ENCODE measurements at regions of chr2 and their contacts with region 1.

Region 1: GRCh38 chr2:240566203-240567136 is 1.8 kb upstream of the RNPEPL1 start:
- DNase-seq: peak; percentile 93
- H3K4me3 Mint-ChIP-seq: peak overlapping the region; percentile 93
- H3K27ac Mint-ChIP-seq: peak overlapping the region; percentile 99
- H3K4me1 Mint-ChIP-seq: peaks cover 83% of the 10 kb centered on the region
- H3K27me3 Mint-ChIP-seq: no peaks in the 10 kb centered on the region

Region 2: GRCh38 chr2:240232961-240233893 is 333.2 kb before region 1 on chr2:
- intact Hi-C with region 1: loop called (anchors 5 kb)
- DNase-seq: peak; percentile 52
- H3K4me3 Mint-ChIP-seq: no peak overlapping the region
- H3K27ac Mint-ChIP-seq: no peak overlapping the region
- H3K4me1 Mint-ChIP-seq: no peaks in the 10 kb centered on the region
- H3K27me3 Mint-ChIP-seq: no peaks in the 10 kb centered on the region

Region 3: DNA sequence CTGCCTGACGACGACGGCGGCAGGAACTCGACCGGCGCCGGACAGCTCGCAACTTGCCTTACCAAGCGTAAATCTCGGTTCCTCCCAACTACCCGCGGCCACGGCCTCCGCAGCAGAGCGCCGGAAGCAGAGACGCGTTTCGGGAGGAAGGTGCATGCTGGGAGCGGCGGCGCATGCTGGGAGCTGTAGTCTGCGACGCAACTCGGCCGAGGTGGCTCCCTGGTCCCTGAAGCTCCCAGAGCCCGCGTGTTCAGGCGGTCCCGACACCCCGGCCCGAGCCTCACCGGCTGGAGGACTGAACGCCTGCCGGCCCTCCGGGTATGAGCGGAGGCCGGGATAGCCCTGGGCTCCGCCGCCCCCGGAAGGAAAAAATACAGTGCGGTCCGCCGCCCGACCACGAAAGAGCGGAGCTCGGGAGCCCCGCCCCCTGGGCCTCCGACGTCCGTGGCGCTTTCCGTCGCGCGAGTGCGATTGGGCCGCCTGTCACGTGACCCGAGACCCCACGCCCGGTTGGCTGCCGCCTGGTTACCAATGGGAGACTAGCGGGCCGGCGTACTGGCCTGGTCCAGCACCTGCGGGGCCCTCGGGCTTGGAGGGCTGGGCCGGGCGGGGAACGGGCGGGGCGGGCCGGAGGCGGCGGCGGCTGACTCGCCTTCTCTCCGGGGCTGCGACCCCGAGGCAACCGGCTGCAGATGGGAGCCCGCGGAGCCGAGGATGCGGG is 19.9 kb after region 1 on chr2 and contains the start of gene CAPN10:
- intact Hi-C with region 1: loop called (anchors 1 kb)
- DNase-seq: peak; percentile 97
- H3K4me3 Mint-ChIP-seq: peak within 1 kb of the TSS; percentile 96
- H3K27ac Mint-ChIP-seq: peak within 1 kb of the TSS; percentile 93
- H3K4me1 Mint-ChIP-seq: peaks cover 38% of the 10 kb centered on the region
- H3K27me3 Mint-ChIP-seq: no peaks in the 10 kb centered on the region
- total RNA-seq, gene CAPN10: 49.8 and 55.4 TPM in 2 replicates

Region 4: DNA sequence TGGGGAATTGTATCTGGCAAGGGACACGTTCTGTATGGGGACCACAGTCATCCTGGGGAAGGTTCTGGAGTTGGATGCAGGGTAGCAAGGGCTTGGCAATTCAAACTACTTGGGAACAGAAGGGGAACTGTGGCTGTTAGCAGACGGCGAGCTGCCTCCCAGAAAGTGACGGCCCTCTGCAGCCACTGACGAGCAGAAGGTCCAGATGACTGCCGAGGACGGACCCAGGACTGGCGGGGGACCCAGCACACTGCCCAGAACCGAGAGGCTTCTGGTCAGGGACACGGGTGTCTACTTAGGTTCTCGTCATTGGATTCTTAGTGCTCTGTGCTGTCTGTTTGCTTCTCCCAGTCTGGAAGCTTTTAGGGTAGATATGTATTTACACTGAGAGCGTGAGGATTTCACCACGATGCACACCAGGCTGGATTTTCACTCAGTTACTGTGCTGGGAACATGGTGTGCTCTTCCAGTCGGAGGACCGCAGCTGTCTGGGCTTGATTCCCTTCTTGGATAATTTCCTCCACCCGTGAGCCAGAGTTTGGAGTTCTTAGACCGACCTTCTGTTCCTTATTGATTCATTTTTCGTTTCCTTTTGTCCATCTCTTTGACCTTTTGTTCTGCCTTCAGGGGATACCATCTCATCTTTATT is 72.2 kb after region 1 on chr2:
- intact Hi-C with region 1: no loop called
- DNase-seq: no peak
- H3K4me3 Mint-ChIP-seq: no peak overlapping the region
- H3K27ac Mint-ChIP-seq: no peak overlapping the region
- H3K4me1 Mint-ChIP-seq: no peaks in the 10 kb centered on the region
- H3K27me3 Mint-ChIP-seq: peaks cover 1% of the 10 kb centered on the region

Region 5: GRCh38 chr2:240714747-240715725 is 148.6 kb after region 1 on chr2:
- intact Hi-C with region 1: no loop called
- DNase-seq: no peak
- H3K4me3 Mint-ChIP-seq: no peak overlapping the region
- H3K27ac Mint-ChIP-seq: no peak overlapping the region
- H3K4me1 Mint-ChIP-seq: no peaks in the 10 kb centered on the region
- H3K27me3 Mint-ChIP-seq: no peaks in the 10 kb centered on the region